ENCODE measurements at regions of chr18 and their contacts with region 1.

Region 1: GRCh38 chr18:50786864-50787263 is 33.0 kb downstream of the MRO start:
- DNase-seq: no peak
- H3K4me3 ChIP-seq: no peak overlapping the region
- H3K27ac ChIP-seq: no peak overlapping the region
- H3K4me1 ChIP-seq: no peaks in the 10 kb centered on the region
- H3K27me3 ChIP-seq: no peaks in the 10 kb centered on the region
- CTCF ChIP-seq: no peak

Region 2: DNA sequence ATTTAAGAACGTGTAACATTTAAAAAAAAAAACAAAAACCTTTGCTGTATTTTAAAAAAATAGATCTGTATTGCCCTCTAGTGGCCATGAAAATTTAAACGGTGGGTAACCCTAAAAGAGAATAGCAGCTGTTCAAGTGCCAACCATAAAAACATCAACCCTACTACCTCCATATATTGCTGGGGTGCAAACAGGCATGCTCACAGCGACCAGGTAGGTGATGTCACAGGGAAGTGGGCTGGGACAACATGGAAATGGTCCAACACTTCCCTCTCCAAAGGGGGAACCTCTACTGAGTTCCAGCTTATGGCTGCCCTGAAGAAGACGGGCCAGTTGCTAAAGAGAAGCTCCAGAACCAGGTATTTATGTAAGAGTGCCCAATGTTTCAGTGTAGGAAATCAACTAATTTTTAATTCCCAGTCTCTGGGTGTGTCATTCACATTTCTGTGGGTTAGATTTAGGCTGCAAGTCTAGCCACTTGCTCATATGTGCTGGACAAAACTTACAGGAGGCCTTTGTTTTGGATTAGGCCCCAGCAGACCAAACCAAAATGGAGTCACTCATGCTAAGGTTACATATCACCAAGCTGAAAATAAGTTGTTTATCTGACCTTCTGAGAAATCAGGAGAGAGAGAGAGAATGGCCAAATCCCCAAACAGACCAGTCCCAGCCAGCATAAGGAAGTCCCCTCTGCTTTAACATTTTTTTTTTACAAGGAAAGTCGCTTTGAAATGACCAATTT is 357.5 kb before region 1 on chr18:
- intact Hi-C with region 1: loop called (anchors 10 kb)
- DNase-seq: no peak
- H3K4me3 ChIP-seq: no peak overlapping the region
- H3K27ac ChIP-seq: no peak overlapping the region
- H3K4me1 ChIP-seq: no peaks in the 10 kb centered on the region
- H3K27me3 ChIP-seq: no peaks in the 10 kb centered on the region
- CTCF ChIP-seq: peak in 2 of 3 experiments; percentile 31 to 50

Region 3: DNA sequence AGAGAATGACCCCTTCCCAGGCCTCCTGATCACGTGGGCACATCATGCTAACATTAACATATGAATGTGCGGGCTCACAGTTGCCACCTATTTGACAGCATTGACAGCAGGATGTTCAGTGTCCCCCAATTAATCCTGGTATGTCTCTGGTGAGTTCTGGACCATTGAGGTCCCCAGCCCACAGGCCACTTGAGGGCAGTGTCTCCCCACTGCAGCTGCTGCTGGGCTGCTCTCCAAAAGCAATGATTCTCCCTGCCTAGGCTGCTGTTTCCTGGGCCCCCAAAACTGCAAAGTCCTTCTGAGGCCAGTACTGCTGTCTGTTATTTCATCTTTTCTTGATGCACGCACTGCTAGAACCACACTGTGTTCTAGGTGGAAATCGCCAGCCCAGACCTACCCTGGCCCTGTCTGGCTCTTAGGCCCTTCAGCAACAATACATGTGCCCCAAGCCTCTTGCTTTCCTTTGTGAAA is 279.7 kb before region 1 on chr18:
- intact Hi-C with region 1: loop called (anchors 1 kb)
- DNase-seq: no peak
- H3K4me3 ChIP-seq: no peak overlapping the region
- H3K27ac ChIP-seq: no peak overlapping the region
- H3K4me1 ChIP-seq: no peaks in the 10 kb centered on the region
- H3K27me3 ChIP-seq: no peaks in the 10 kb centered on the region
- CTCF ChIP-seq: peak; percentile 27 to 64 (median 47)

Measured in ascending aorta (tissue), 2 donors.